ENCODE measurements at regions of chr11 and their contacts with region 1.

Region 1: DNA sequence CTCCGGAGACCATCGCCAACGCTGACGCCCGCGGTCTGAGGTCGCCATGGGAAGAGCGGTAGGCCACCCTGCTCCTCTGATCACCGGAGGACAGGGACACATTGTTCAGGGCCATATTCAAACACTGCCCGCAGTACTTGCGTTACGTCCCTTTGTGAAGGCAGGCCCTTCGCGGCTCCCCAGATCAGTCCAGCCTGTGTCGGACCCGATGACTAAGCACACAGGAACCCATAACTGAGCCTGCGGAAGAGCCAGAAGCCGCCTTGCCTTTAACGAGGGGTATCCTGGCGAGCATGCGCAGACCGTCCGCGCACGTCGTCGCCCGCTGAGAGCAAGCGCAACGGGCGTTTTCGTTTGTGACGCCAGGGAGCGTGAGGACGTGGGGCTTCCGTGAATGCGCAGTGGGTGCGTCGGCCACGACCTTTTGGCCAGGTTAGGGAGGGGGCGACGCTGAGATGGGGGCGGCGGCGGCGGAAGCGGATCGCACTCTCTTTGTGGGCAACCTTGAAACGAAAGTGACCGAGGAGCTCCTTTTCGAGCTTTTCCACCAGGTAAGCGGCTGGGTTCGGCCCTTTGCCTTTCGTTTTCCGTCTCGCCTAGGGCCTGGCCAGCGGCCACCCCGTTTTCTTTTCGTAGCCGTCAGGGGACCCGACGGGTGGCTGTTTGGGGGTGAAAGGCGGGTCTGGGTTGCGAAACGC is at the starts of genes C11orf71 and RBM7:
- DNase-seq: peak; percentile 98
- H3K4me3 Mint-ChIP-seq: peak within 1 kb of the TSS; percentile 95
- H3K27ac Mint-ChIP-seq: peak within 1 kb of the TSS; percentile 97
- H3K4me1 Mint-ChIP-seq: peaks cover 41% of the 10 kb centered on the region
- H3K27me3 Mint-ChIP-seq: no peaks in the 10 kb centered on the region
- total RNA-seq, gene C11orf71: 7.3 to 7.6 TPM
- total RNA-seq, gene RBM7: 36.5 to 46.3 TPM

Region 2: GRCh38 chr11:114330373-114330772 is 70.0 kb before region 1 on chr11:
- CTCF ChIA-PET with region 1: no interaction called
- POLR2A ChIA-PET with region 1: no interaction called
- DNase-seq: no peak
- H3K4me3 Mint-ChIP-seq: no peak overlapping the region
- H3K27ac Mint-ChIP-seq: no peak overlapping the region
- H3K4me1 Mint-ChIP-seq: no peaks in the 10 kb centered on the region
- H3K27me3 Mint-ChIP-seq: peaks cover 25% of the 10 kb centered on the region

Region 3: GRCh38 chr11:114348200-114349191 is 51.9 kb before region 1 on chr11:
- CTCF ChIA-PET with region 1: no interaction called
- POLR2A ChIA-PET with region 1: no interaction called
- DNase-seq: peak; percentile 27
- H3K4me3 Mint-ChIP-seq: no peak overlapping the region
- H3K27ac Mint-ChIP-seq: no peak overlapping the region
- H3K4me1 Mint-ChIP-seq: peaks cover 13% of the 10 kb centered on the region
- H3K27me3 Mint-ChIP-seq: no peaks in the 10 kb centered on the region

Region 4: GRCh38 chr11:114416441-114416961 is 16.1 kb after region 1 on chr11:
- CTCF ChIA-PET with region 1: no interaction called
- POLR2A ChIA-PET with region 1: interaction called, 12 read pairs
- DNase-seq: no peak
- H3K4me3 Mint-ChIP-seq: no peak overlapping the region
- H3K27ac Mint-ChIP-seq: no peak overlapping the region
- H3K4me1 Mint-ChIP-seq: no peaks in the 10 kb centered on the region
- H3K27me3 Mint-ChIP-seq: no peaks in the 10 kb centered on the region

Region 5: GRCh38 chr11:114439229-114440120 is 39.1 kb after region 1 on chr11 and contains the start of gene REXO2:
- CTCF ChIA-PET with region 1: interaction called, 3 read pairs
- POLR2A ChIA-PET with region 1: interaction called, 31 read pairs
- DNase-seq: peak; percentile 96
- H3K4me3 Mint-ChIP-seq: peak within 1 kb of the TSS; percentile 93
- H3K27ac Mint-ChIP-seq: peak within 1 kb of the TSS; percentile 79
- H3K4me1 Mint-ChIP-seq: peaks cover 34% of the 10 kb centered on the region
- H3K27me3 Mint-ChIP-seq: no peaks in the 10 kb centered on the region
- total RNA-seq, gene REXO2: 82.1 to 83.4 TPM

Measured in activated CD4-positive, alpha-beta memory T cell treated with anti-CD3 and anti-CD28 coated beads, Interleukin-2, amount 10 ng/mL, durations not matched to agents 7 days and 5 days (primary cell).